Activated T-helper 1 cell treated with anti-CD3 and anti-CD28 coated beads, Interleukin-12 subunit alpha, Interleukin-12 subunit beta, Interleukin-2, Interleukin-4 antibody, amounts not matched to agents 30 ng/mL and 10 ng/mL and 1 ng/mL, durations not matched to agents 14 hours and 24 hours and 36 hours (primary cell): ENCODE measurements at regions of chrX and their contacts with region 1.

Region 1: DNA sequence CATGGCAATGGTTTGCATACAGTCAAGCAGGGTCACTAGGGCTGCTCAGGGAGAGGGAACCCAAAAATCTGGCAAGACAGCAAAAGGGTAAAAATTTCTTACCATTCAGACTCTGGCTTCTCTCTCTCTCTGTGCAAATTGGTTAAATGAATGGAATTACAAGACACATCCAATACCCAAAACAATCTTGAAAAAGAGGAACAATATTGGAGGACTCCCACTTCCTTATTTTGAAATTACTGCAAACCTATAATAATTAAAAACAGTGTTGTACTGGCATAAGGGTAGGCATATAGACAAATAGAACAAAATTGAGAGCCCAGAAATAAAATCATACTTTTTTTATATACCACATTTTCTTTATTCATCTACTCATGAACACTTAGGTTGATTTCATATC is 24.1 kb downstream of the ETDA start:
- DNase-seq: no peak
- H3K4me3 Mint-ChIP-seq: no peak overlapping the region
- H3K27ac Mint-ChIP-seq: no peak overlapping the region
- H3K4me1 Mint-ChIP-seq: no peaks in the 10 kb centered on the region
- H3K27me3 Mint-ChIP-seq: no peaks in the 10 kb centered on the region

Region 2: DNA sequence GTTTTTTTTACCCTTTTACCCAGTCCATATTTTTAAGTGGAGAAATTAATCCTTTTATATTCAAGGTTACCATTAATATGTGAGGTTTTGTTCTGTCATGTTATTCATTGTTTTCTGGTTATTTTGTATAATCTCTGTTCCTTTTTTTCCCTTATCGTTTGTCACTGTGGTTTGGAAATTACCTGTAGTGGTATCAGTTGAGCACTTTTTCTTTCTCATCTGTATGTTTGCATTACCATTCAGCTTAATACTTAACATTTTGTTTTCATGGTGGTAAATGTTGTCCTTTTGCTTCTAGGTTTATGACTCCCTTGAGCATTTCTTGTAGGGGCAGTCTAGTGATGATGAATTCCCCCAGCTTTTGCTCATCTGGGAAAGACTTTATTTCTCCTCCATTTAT is 39.9 kb after region 1 on chrX:
- intact Hi-C with region 1: loop called (anchors 2 kb)
- DNase-seq: no peak
- H3K4me3 Mint-ChIP-seq: no peak overlapping the region
- H3K27ac Mint-ChIP-seq: no peak overlapping the region
- H3K4me1 Mint-ChIP-seq: no peaks in the 10 kb centered on the region
- H3K27me3 Mint-ChIP-seq: peaks cover 1% of the 10 kb centered on the region